ENCODE measurements at regions of chr6 and their contacts with region 1.

Region 1: DNA sequence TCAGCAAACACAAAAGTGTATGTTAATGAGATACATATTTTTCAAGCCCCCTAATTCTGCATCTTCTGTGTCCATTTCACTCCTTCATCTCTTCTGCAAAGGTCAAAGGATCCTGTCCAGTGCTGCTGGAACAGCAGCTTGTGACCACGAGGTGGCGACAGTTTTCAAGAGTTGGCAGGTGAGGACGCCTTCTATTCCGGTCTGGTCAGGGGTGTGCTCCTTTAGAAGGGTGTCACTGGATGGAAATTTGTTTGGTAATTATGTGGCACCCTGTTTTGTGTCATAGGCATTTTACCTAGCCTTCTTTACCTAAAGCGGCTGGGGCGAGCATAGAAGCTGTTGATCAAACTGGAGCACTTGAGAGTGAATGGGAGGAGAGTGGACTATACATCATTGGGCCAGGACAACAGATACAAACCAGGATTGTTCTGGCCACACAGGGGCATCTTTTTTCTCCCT is 32.9 kb upstream of the ERVFRD-1 start:
- DNase-seq: peak; percentile 86
- H3K4me3 Mint-ChIP-seq: no peak overlapping the region
- H3K27ac Mint-ChIP-seq: no peak overlapping the region
- H3K4me1 Mint-ChIP-seq: peaks cover 6% of the 10 kb centered on the region
- H3K27me3 Mint-ChIP-seq: no peaks in the 10 kb centered on the region

Region 2: DNA sequence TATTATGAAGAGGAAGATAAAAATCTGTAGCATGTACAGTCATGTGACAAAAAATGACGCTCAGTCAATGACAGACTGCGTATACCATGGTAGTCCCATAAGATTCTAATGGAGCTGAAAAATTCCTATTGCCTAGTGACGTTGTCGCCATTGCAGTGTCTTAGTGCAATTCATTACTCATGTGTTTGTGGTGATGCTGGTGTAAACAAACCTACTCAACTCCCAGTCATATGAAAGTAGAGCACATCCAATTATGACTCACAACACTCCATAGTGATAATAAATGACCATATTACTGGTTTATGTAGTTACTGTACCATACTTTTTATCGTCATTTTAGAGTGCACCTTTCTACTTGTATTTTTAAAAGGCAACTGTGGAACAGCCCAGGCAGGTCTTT is 774.5 kb before region 1 on chr6:
- CTCF ChIA-PET with region 1: no interaction called
- POLR2A ChIA-PET with region 1: no interaction called
- intact Hi-C with region 1: no loop called
- DNase-seq: no peak
- H3K4me3 Mint-ChIP-seq: no peak overlapping the region
- H3K27ac Mint-ChIP-seq: no peak overlapping the region
- H3K4me1 Mint-ChIP-seq: no peaks in the 10 kb centered on the region
- H3K27me3 Mint-ChIP-seq: peaks cover 2% of the 10 kb centered on the region

Region 3: DNA sequence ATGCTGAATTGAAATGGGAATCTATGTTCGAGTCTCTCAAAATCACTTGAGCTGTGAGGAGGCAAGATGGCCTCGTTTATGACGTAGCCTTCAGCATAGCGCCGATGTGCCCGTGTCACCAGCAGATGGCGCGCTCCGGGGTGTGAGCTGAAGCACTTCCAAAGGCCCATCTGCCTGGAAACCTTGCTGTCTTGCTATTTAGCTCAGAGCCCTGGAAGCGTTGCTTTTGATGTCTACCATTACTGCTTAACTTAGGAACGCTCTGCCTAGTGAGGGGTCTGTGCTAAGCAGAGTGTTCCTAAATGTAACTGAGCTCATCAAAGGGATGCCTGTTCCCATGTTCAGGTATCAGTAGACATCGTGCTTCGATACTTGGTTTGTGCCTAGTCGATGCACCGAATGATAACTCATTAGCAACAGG is 189.8 kb before region 1 on chr6:
- CTCF ChIA-PET with region 1: interaction called, 5 read pairs
- POLR2A ChIA-PET with region 1: no interaction called
- intact Hi-C with region 1: loop called (anchors 5 kb)
- DNase-seq: peak; percentile 83
- H3K4me3 Mint-ChIP-seq: no peak overlapping the region
- H3K27ac Mint-ChIP-seq: no peak overlapping the region
- H3K4me1 Mint-ChIP-seq: no peaks in the 10 kb centered on the region
- H3K27me3 Mint-ChIP-seq: peaks cover 12% of the 10 kb centered on the region

Region 4: DNA sequence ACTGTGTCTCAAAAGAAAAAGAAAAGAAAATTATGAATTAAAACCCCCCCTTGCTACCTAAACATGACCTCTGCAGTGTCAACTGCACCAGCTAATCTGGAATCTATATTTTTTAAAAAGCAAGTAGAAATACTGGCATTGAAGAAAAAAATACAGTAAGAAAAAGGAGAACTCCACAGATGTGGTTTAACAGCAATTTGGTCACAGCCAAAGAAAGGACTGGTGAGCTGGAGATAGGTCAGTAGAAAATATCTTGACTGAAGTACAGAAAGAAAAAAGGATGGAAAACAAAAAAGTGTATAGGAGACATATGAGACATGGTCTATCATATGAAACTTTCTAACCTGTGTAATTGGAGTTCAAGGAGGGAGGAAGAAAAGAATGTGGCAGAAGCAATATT is 11.2 kb after region 1 on chr6:
- CTCF ChIA-PET with region 1: interaction called, 17 read pairs
- POLR2A ChIA-PET with region 1: no interaction called
- intact Hi-C with region 1: no loop called
- DNase-seq: no peak
- H3K4me3 Mint-ChIP-seq: no peak overlapping the region
- H3K27ac Mint-ChIP-seq: no peak overlapping the region
- H3K4me1 Mint-ChIP-seq: peaks cover 7% of the 10 kb centered on the region
- H3K27me3 Mint-ChIP-seq: peaks cover 4% of the 10 kb centered on the region

Region 5: DNA sequence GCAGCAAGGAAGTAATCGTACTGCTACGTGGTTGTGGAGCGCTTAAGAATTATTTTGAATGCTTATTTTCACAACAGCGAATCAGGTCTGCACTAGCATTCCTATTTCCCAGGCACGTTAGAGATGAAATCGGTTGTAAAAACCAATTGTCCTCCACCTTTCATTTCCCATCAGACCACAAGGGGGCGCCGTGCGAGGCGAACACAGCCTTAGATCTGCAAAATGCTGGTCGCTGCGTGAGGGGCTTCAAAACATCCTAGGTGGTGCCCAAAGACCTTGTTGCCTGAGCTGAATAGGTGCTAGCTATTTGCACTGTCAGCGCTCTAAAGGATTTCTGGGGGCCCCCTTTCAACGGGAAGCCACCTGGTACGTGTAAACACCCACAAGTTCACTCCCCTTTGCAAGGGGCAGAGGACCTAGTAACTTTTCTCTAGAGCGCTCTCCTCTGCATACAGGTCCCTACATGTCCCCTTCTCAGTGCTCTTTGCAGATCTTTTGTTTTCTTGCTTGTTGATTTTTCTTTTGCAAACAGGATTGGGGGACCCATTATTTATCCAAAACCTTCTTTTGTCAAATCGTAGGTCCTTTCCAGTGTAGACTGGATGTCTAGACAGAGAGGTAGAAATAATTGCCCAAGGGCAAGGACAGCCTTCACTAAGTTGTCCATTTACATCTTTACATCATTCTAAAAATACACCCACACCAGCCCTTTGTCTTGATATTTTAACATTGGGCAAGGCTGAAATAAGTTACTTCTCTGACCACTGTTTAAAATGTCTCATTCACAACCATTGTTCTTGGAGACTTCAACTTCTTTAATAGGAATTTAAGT is 28.3 kb after region 1 on chr6:
- CTCF ChIA-PET with region 1: interaction called, 8 read pairs
- POLR2A ChIA-PET with region 1: no interaction called
- intact Hi-C with region 1: loop called (anchors 2 kb)
- DNase-seq: peak; percentile 81
- H3K4me3 Mint-ChIP-seq: peak overlapping the region; percentile 16
- H3K27ac Mint-ChIP-seq: no peak overlapping the region
- H3K4me1 Mint-ChIP-seq: peaks cover 16% of the 10 kb centered on the region
- H3K27me3 Mint-ChIP-seq: no peaks in the 10 kb centered on the region

Region 6: GRCh38 chr6:11258260-11259237 is 114.1 kb after region 1 on chr6:
- CTCF ChIA-PET with region 1: no interaction called
- POLR2A ChIA-PET with region 1: no interaction called
- intact Hi-C with region 1: no loop called
- DNase-seq: peak; percentile 48
- H3K4me3 Mint-ChIP-seq: peak overlapping the region; percentile 21
- H3K27ac Mint-ChIP-seq: peak overlapping the region; percentile 62
- H3K4me1 Mint-ChIP-seq: peaks cover 61% of the 10 kb centered on the region
- H3K27me3 Mint-ChIP-seq: no peaks in the 10 kb centered on the region

Region 7: GRCh38 chr6:11575408-11576033 is 431.1 kb after region 1 on chr6:
- CTCF ChIA-PET with region 1: no interaction called
- POLR2A ChIA-PET with region 1: no interaction called
- intact Hi-C with region 1: loop called (anchors 1 kb)
- DNase-seq: peak; percentile 63
- H3K4me3 Mint-ChIP-seq: no peak overlapping the region
- H3K27ac Mint-ChIP-seq: no peak overlapping the region
- H3K4me1 Mint-ChIP-seq: no peaks in the 10 kb centered on the region
- H3K27me3 Mint-ChIP-seq: no peaks in the 10 kb centered on the region